CD8-positive, alpha-beta T cell (primary cell): ENCODE measurements at regions of chr20 and their contacts with region 1.

Region 1: GRCh38 chr20:25399037-25399430 is 8.4 kb upstream of the ABHD12 start:
- DNase-seq: peak in 4 of 9 experiments; percentile 5 to 70 (median 39)
- ATAC-seq: peak; percentile 54
- H3K4me3 ChIP-seq: no peak overlapping the region
- H3K4me3 Mint-ChIP-seq: no peak overlapping the region
- H3K27ac ChIP-seq: no peak overlapping the region
- H3K27ac Mint-ChIP-seq: no peak overlapping the region
- H3K4me1 ChIP-seq: no peaks in the 10 kb centered on the region
- H3K4me1 Mint-ChIP-seq: no peaks in the 10 kb centered on the region
- H3K27me3 ChIP-seq: no peaks in the 10 kb centered on the region
- H3K27me3 Mint-ChIP-seq: no peaks in the 10 kb centered on the region
- CTCF ChIP-seq: peak; percentile 47

Region 2: GRCh38 chr20:25223179-25223661 is 175.8 kb before region 1 on chr20:
- CTCF ChIA-PET with region 1: interaction called, 3 read pairs
- POLR2A ChIA-PET with region 1: no interaction called
- intact Hi-C with region 1: loop called in 1 of 2 experiments (anchors 1 kb)
- DNase-seq: no peak
- ATAC-seq: peak; percentile 56
- H3K4me3 ChIP-seq: no peak overlapping the region
- H3K4me3 Mint-ChIP-seq: no peak overlapping the region
- H3K27ac ChIP-seq: no peak overlapping the region
- H3K27ac Mint-ChIP-seq: peak overlapping the region; percentile 45
- H3K4me1 ChIP-seq: no peaks in the 10 kb centered on the region
- H3K4me1 Mint-ChIP-seq: peaks cover 3% of the 10 kb centered on the region
- H3K27me3 ChIP-seq: no peaks in the 10 kb centered on the region
- H3K27me3 Mint-ChIP-seq: no peaks in the 10 kb centered on the region
- CTCF ChIP-seq: no peak

Region 3: GRCh38 chr20:25310268-25310920 is 88.6 kb before region 1 on chr20:
- CTCF ChIA-PET with region 1: interaction called, 3 read pairs
- POLR2A ChIA-PET with region 1: no interaction called
- intact Hi-C with region 1: loop called (anchors 5 kb)
- DNase-seq: peak in 6 of 9 experiments; percentile 13 to 53 (median 39)
- ATAC-seq: peak; percentile 86
- H3K4me3 ChIP-seq: peak overlapping the region in 1 of 2 experiments; percentile 13
- H3K4me3 Mint-ChIP-seq: peak overlapping the region; percentile 66
- H3K27ac ChIP-seq: peak overlapping the region in 1 of 2 experiments; percentile 52
- H3K27ac Mint-ChIP-seq: peak overlapping the region; percentile 49
- H3K4me1 ChIP-seq: peaks cover 9% of the 10 kb centered on the region
- H3K4me1 Mint-ChIP-seq: peaks cover 16% of the 10 kb centered on the region
- H3K27me3 ChIP-seq: no peaks in the 10 kb centered on the region
- H3K27me3 Mint-ChIP-seq: no peaks in the 10 kb centered on the region
- CTCF ChIP-seq: no peak

Region 4: DNA sequence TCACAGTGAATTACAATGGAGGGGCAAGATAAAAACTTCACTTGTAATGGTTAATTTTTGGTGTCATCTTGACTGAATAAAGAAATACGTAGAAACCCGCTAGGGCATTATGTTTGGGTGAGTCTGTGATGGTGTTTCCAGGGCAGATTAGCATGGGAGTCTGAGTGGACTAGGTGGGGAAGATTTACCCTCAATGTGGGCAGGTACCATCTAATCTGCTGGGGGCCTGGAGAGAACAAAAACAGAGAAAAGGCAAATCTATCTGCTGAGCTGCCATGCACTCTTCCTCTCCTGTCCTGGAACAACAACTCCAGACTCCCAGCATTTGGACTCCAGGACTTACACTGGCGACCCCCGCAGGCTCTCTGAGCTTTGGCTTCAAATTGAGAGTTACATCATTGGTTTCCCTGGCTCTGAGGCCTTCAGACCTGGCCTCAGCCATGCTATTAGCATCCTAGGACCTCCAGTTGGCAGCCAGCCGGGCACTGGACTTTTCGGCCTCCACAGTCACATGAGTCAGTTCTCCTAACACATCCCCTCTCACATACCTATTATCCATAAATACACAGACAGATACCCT is 166.6 kb after region 1 on chr20:
- CTCF ChIA-PET with region 1: no interaction called
- POLR2A ChIA-PET with region 1: no interaction called
- intact Hi-C with region 1: no loop called
- DNase-seq: no peak
- ATAC-seq: no peak
- H3K4me3 ChIP-seq: no peak overlapping the region
- H3K4me3 Mint-ChIP-seq: no peak overlapping the region
- H3K27ac ChIP-seq: no peak overlapping the region
- H3K27ac Mint-ChIP-seq: no peak overlapping the region
- H3K4me1 ChIP-seq: no peaks in the 10 kb centered on the region
- H3K4me1 Mint-ChIP-seq: peaks cover 2% of the 10 kb centered on the region
- H3K27me3 ChIP-seq: no peaks in the 10 kb centered on the region
- H3K27me3 Mint-ChIP-seq: no peaks in the 10 kb centered on the region
- CTCF ChIP-seq: no peak